Thyroid gland (tissue), 4 donors: ENCODE measurements at regions of chr9 and their contacts with region 1.

Region 1: GRCh38 chr9:763692-764524 is 77.6 kb upstream of the DMRT1 start:
- DNase-seq: peak; percentile 34 to 44
- H3K4me3 ChIP-seq: no peak overlapping the region
- H3K27ac ChIP-seq: no peak overlapping the region
- H3K4me1 ChIP-seq: peaks cover 38 to 43% of the 10 kb centered on the region in 2 donors
- H3K27me3 ChIP-seq: no peaks in the 10 kb centered on the region
- CTCF ChIP-seq: peak; percentile 21 to 90 (median 66)
- POLR2A ChIP-seq: no peak

Region 2: GRCh38 chr9:589723-590122 is 174.2 kb before region 1 on chr9:
- intact Hi-C with region 1: no loop called
- DNase-seq: no peak
- H3K4me3 ChIP-seq: no peak overlapping the region
- H3K27ac ChIP-seq: peak overlapping the region in 1 of 3 donors; percentile 46
- H3K4me1 ChIP-seq: peaks cover 13 to 33% of the 10 kb centered on the region in 2 donors
- H3K27me3 ChIP-seq: no peaks in the 10 kb centered on the region
- CTCF ChIP-seq: no peak
- POLR2A ChIP-seq: no peak

Region 3: GRCh38 chr9:618478-618877 is 145.4 kb before region 1 on chr9:
- intact Hi-C with region 1: loop called (anchors 5 kb)
- DNase-seq: no peak
- H3K4me3 ChIP-seq: no peak overlapping the region
- H3K27ac ChIP-seq: peak overlapping the region in 2 of 3 donors; percentile 22 to 40
- H3K4me1 ChIP-seq: peaks cover 12 to 24% of the 10 kb centered on the region in 2 donors
- H3K27me3 ChIP-seq: no peaks in the 10 kb centered on the region
- CTCF ChIP-seq: no peak
- POLR2A ChIP-seq: no peak

Region 4: DNA sequence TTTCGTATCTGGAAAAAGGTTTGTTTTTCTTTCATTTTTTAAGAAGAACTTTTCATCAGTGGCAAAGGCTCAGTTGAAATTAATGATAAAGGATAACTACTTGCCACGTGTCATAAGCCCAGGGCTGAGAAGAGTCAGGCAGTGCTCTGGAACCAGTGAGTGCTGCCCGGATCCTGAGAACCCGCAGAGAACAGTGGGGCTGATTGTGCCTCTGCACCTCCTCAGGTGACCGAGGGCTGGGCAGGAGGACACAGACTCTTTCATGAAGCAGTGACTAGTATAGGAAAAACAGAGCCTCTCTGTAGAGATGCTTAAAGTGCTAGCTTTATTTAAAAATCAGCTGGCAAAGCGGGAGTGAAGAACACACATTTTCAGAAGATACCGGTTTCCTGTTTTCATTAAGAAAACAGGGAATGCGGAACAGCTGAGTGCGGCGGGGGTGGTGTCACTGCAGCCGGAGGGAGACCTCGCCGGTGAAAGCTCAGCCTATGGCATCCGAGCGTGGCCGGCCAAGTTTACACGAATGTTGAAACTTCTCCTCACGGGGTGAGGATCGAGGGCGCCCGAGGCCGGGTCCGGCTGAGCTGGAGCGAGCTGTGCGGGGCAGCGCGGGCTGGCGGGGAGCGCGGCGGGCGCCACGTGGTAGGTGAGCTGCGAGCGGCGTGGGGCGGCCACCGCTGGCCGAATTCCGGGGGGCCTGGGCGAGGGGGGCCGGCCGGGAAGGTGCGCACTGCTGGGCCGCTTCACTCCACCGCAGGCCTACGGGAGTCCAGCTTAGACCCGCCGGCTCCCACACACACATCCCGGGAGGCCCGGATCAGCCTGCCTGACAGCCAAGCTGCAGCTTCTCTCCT is 57.1 kb before region 1 on chr9:
- intact Hi-C with region 1: no loop called
- DNase-seq: peak; percentile 82 to 86
- H3K4me3 ChIP-seq: peak overlapping the region; percentile 0 to 63 (median 57)
- H3K27ac ChIP-seq: peak overlapping the region; percentile 96 to 98 (median 97)
- H3K4me1 ChIP-seq: peaks cover 20 to 34% of the 10 kb centered on the region in 2 donors
- H3K27me3 ChIP-seq: no peaks in the 10 kb centered on the region
- CTCF ChIP-seq: no peak
- POLR2A ChIP-seq: peak in 1 of 2 donors; percentile 87

Region 5: GRCh38 chr9:893843-894420 is 130.0 kb after region 1 on chr9:
- intact Hi-C with region 1: no loop called
- DNase-seq: peak; percentile 75 to 76
- H3K4me3 ChIP-seq: no peak overlapping the region
- H3K27ac ChIP-seq: peak overlapping the region in 2 of 3 donors; percentile 13 to 52
- H3K4me1 ChIP-seq: no peaks in the 10 kb centered on the region
- H3K27me3 ChIP-seq: no peaks in the 10 kb centered on the region
- CTCF ChIP-seq: peak; percentile 63 to 99 (median 87)
- POLR2A ChIP-seq: no peak